ENCODE measurements at regions of chr6 and their contacts with region 1.

Region 1: DNA sequence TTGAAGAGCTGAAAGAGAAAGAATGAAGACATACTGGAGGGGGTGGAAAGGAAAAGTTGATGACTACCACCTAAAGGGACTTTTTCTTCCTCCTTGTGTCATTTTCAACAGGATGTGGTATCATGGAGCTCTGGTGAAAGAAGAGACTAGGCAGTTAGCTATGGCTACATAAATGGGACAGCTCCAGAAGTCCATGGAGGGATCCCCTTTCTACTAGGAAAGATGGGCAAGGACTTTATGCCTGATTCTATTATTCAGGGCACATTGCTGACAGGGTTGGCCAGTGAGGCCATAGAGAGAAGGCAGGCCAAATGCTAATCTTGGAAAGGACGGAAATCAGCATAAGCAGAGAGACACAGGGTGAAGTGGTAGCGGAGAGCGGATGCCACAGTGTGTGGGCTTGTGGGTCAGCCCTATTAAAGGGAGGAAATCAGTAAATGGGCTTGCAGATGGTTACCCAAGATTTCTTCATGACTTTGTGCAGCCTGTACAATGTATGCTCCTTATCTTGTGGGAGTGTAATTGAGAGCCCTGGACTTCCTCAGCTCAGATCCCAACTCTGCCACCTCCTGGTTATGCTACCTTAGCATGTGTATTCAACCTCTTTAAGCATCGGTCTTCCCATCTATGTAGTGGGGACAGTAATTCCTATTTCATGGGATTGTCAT is 77.4 kb upstream of the TMEM170B start:
- DNase-seq: no peak
- H3K4me3 Mint-ChIP-seq: peak overlapping the region; percentile 61
- H3K27ac Mint-ChIP-seq: peak overlapping the region; percentile 88
- H3K4me1 Mint-ChIP-seq: peaks cover 33% of the 10 kb centered on the region
- H3K27me3 Mint-ChIP-seq: no peaks in the 10 kb centered on the region

Region 2: GRCh38 chr6:11275598-11275997 is 184.5 kb before region 1 on chr6:
- intact Hi-C with region 1: loop called (anchors 1 kb)
- DNase-seq: no peak
- H3K4me3 Mint-ChIP-seq: peak overlapping the region; percentile 0
- H3K27ac Mint-ChIP-seq: peak overlapping the region; percentile 41
- H3K4me1 Mint-ChIP-seq: peaks cover 43% of the 10 kb centered on the region
- H3K27me3 Mint-ChIP-seq: no peaks in the 10 kb centered on the region

Region 3: DNA sequence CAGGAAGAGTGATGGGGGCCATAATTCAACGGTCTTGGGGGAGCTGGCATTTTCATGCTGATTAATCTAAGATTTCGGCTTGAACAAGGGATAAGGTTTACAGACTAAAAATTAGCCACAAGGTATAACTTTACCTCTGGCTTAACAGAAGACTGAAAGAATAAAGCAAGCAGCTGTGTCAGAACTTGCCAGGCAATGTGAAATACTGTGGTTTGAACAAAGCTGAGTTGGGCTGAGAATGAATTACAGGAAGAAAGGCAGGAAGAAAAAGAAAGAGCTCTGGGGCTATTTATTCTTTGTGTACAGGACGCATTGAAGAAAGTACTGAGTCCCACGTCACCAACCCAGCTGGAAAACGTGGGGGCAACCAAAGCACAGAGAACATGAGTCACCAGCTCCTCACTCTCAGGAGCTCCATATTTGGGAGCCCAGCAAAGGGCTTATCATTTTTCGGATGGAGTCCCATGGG is 106.2 kb before region 1 on chr6:
- intact Hi-C with region 1: loop called (anchors 1 kb)
- DNase-seq: peak; percentile 58
- H3K4me3 Mint-ChIP-seq: peak overlapping the region; percentile 74
- H3K27ac Mint-ChIP-seq: peak overlapping the region; percentile 93
- H3K4me1 Mint-ChIP-seq: peaks cover 90% of the 10 kb centered on the region
- H3K27me3 Mint-ChIP-seq: no peaks in the 10 kb centered on the region

Region 4: GRCh38 chr6:11381801-11382513 is 78.2 kb before region 1 on chr6:
- intact Hi-C with region 1: loop called (anchors 1 kb)
- DNase-seq: peak; percentile 69
- H3K4me3 Mint-ChIP-seq: peak overlapping the region; percentile 92
- H3K27ac Mint-ChIP-seq: peak overlapping the region; percentile 96
- H3K4me1 Mint-ChIP-seq: peaks cover 75% of the 10 kb centered on the region
- H3K27me3 Mint-ChIP-seq: no peaks in the 10 kb centered on the region

Region 5: DNA sequence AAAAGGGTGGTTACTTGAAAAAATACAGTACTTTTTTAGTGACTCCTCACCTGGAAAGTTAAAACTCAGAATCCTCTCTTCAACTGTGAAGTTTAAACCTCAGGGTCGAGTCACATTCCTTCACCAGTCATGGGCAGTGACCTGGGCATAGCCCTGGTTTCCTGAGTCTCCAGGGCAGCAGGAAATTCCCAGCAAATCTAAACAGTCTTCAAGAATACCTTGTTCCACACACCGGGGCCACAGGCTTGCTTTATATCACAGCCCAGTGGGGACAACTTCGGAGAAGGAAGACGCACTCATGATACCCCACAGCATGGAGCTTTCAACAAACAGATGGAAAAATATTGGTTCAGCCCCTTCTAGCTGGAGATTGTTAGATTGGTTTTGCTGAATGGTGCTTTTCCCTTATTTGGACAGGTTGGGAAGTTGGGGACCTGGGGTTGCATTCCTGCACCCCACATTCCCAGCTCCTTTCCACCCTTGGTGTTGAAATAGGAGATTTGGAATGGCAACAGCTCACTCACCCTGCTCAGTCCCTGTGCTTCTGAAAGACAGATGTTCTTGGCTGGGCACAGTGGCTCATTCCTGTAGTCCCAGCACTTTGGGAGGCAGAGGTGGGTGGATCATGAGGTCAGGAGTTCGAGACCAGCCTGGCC is 35.6 kb before region 1 on chr6:
- intact Hi-C with region 1: loop called (anchors 1 kb)
- DNase-seq: no peak
- H3K4me3 Mint-ChIP-seq: no peak overlapping the region
- H3K27ac Mint-ChIP-seq: peak overlapping the region; percentile 7
- H3K4me1 Mint-ChIP-seq: peaks cover 63% of the 10 kb centered on the region
- H3K27me3 Mint-ChIP-seq: no peaks in the 10 kb centered on the region

Region 6: GRCh38 chr6:11447265-11447664 is 12.9 kb before region 1 on chr6:
- intact Hi-C with region 1: loop called (anchors 1 kb)
- DNase-seq: no peak
- H3K4me3 Mint-ChIP-seq: no peak overlapping the region
- H3K27ac Mint-ChIP-seq: no peak overlapping the region
- H3K4me1 Mint-ChIP-seq: peaks cover 32% of the 10 kb centered on the region
- H3K27me3 Mint-ChIP-seq: no peaks in the 10 kb centered on the region

Region 7: GRCh38 chr6:11537229-11538051 is 77.3 kb after region 1 on chr6 and contains the start of gene TMEM170B:
- intact Hi-C with region 1: loop called (anchors 2 kb)
- DNase-seq: peak; percentile 90
- H3K4me3 Mint-ChIP-seq: peak within 1 kb of the TSS; percentile 84
- H3K27ac Mint-ChIP-seq: peak within 1 kb of the TSS; percentile 68
- H3K4me1 Mint-ChIP-seq: peaks cover 17% of the 10 kb centered on the region
- H3K27me3 Mint-ChIP-seq: peaks cover 62% of the 10 kb centered on the region
- total RNA-seq, gene TMEM170B: 0.78 and 0.86 TPM in 2 replicates